A549 (cell line): ENCODE measurements at regions of chr12 and their contacts with region 1.

Region 1: GRCh38 chr12:2783936-2784600 is 10.7 kb upstream of the FKBP4 start:
- DNase-seq: peak; percentile 62 to 68
- ATAC-seq: peak; percentile 96 to 98
- H3K4me3 ChIP-seq: peak overlapping the region; percentile 27; the same call in 2 of the 3 replicates
- H3K27ac ChIP-seq: no peak overlapping the region
- H3K4me1 ChIP-seq: 0 out of 3 replicates have a peak, but pooled peaks cover 6% of the 10 kb centered on the region
- CTCF ChIP-seq: peak; percentile 72
- EP300 ChIP-seq: no peak
- POLR2A ChIP-seq: no peak
- RAD21 ChIP-seq: peak; percentile 64 to 74

Region 2: DNA sequence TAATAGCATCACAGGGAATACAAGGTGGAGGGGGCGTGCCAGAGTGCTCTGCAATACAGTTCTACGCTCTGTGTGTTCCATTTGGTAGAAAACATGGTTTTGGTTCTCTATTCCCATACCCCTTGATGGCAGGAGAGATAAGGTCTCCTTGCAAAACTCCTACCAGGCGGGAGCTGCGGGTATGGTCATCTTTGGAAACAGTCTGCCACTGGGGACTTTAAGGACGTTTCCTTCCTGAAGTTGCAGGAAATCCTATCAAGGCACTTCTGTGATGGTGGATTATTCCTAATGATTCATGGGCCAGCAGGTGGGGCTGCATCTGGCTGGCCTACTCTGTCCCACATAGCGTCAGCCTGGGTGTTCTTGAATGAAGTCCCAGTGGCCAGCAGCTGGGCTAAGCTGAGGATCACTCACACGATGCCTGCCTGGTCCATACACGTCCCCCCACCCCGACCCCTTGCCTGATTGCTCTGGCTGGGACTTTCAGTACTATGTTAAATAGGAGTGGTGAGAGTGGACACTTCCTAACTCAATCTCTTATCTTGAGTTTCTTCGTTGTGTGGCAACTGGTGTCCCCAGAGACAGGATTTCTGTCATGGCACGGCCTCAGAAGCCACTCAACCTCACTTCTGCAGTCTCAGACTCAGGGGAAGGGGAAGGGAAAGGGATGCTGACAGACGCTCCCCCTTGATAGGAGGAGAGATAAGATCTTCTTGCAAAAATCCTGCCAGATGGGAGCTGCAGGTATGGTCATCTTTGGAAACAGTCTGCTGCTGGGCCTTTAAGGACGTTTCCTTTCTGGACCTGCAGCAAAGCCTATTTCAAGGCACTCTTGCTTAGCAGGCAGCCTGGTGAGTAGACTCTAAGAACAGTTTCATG is 50.4 kb before region 1 on chr12:
- CTCF ChIA-PET with region 1: interaction called, 22 read pairs
- POLR2A ChIA-PET with region 1: no interaction called
- DNase-seq: peak in 1 of 2 experiments; percentile 16
- ATAC-seq: peak in 1 of 2 experiments; percentile 67; a peak in 3 of 6 replicates
- H3K4me3 ChIP-seq: no peak overlapping the region
- H3K27ac ChIP-seq: no peak overlapping the region
- H3K4me1 ChIP-seq: no peaks in the 10 kb centered on the region
- CTCF ChIP-seq: no peak
- EP300 ChIP-seq: no peak
- POLR2A ChIP-seq: no peak
- RAD21 ChIP-seq: no peak

Region 3: GRCh38 chr12:2739817-2740641 is 44.0 kb before region 1 on chr12:
- CTCF ChIA-PET with region 1: interaction called, 30 read pairs
- POLR2A ChIA-PET with region 1: no interaction called
- DNase-seq: peak in 1 of 2 experiments; percentile 44
- ATAC-seq: peak in 1 of 2 experiments; percentile 64; a peak in 4 of 6 replicates
- H3K4me3 ChIP-seq: no peak overlapping the region
- H3K27ac ChIP-seq: no peak overlapping the region
- H3K4me1 ChIP-seq: no peaks in the 10 kb centered on the region
- CTCF ChIP-seq: peak; percentile 56
- EP300 ChIP-seq: no peak
- POLR2A ChIP-seq: no peak
- RAD21 ChIP-seq: peak; percentile 64 to 75

Region 4: GRCh38 chr12:2759733-2760132 is 24.3 kb before region 1 on chr12:
- CTCF ChIA-PET with region 1: interaction called, 24 read pairs
- POLR2A ChIA-PET with region 1: no interaction called
- DNase-seq: no peak
- ATAC-seq: no peak
- H3K4me3 ChIP-seq: no peak overlapping the region
- H3K27ac ChIP-seq: no peak overlapping the region
- H3K4me1 ChIP-seq: no peaks in the 10 kb centered on the region
- CTCF ChIP-seq: no peak
- EP300 ChIP-seq: no peak
- POLR2A ChIP-seq: no peak
- RAD21 ChIP-seq: no peak

Region 5: DNA sequence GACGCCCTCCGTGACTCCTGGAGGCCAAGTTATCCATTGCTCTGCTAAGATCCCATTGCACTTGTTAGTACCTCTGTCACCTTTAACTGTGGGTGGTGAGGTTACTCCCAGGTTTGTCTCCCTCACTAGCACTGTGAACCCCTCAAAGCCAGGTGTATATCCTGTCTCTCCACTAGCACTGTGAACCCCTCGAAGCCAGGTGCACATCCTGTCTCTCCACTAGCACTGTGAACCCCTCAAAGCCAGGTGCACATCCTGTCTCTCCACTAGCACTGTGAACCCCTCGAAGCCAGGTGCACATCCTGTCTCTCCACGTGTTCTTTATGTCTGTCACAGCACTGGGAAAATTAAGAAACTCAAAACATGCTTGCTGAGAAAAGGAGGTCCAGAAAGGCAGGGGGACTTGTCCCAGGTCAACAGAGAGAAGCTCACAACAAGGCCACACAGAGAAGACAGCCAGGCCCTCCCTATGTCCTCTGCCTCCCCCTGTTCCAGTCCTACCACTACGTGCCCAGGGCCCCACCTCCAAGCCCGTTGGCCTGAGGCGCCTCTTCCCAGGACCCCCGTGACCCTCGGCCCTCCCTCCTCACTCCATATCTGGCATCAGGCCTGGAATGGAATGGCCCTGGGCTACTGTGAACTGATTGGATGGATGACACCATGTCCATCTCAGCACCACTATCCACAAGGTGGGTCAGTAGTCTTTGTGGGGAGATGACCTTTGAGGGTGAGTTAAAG is 15.7 kb before region 1 on chr12:
- CTCF ChIA-PET with region 1: interaction called, 18 read pairs
- POLR2A ChIA-PET with region 1: no interaction called
- DNase-seq: no peak
- ATAC-seq: no peak
- H3K4me3 ChIP-seq: no peak overlapping the region
- H3K27ac ChIP-seq: no peak overlapping the region
- H3K4me1 ChIP-seq: no peaks in the 10 kb centered on the region
- CTCF ChIP-seq: no peak
- EP300 ChIP-seq: no peak
- POLR2A ChIP-seq: no peak
- RAD21 ChIP-seq: no peak

Region 6: DNA sequence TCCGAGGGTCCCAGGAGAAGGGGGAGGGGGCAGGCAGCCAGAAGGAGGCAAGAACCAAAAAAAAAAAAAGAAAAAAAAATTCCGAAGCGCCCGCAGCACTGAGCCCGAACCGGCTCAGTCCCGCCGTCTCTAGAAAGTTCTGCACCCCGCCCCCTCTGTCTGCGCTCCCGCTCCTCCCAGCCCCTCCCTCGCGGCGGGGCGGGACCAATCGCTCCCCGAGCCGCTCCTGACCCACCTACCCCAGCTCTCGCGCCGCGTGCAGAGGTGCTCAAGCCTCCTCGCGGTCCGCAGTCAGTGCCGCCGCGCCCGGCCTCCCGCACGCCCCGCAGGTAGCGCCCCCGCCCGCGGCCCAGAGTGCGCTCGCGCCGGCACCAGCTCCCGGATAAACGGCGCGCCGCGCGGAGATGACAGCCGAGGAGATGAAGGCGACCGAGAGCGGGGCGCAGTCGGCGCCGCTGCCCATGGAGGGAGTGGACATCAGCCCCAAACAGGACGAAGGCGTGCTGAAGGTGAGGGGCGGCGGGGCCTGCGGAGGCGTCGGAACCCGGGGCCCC is 10.7 kb after region 1 on chr12 and contains the start of gene FKBP4:
- CTCF ChIA-PET with region 1: interaction called, 57 read pairs
- POLR2A ChIA-PET with region 1: interaction called, 3 read pairs
- DNase-seq: peak; percentile 84 to 91
- ATAC-seq: peak; percentile 92 to 94
- H3K4me3 ChIP-seq: peak within 1 kb of the TSS; percentile 76
- H3K27ac ChIP-seq: peak within 1 kb of the TSS; percentile 97 to 99
- H3K4me1 ChIP-seq: peaks cover 18% of the 10 kb centered on the region
- CTCF ChIP-seq: no peak
- EP300 ChIP-seq: no peak
- POLR2A ChIP-seq: peak; percentile 99
- RAD21 ChIP-seq: no peak
- polyA plus RNA-seq, gene FKBP4: 108 and 125 TPM in 2 replicates

Region 7: GRCh38 chr12:2812290-2813213 is 28.5 kb after region 1 on chr12 and contains the start of gene ITFG2:
- CTCF ChIA-PET with region 1: interaction called, 10 read pairs
- POLR2A ChIA-PET with region 1: interaction called, 4 read pairs
- DNase-seq: peak; percentile 96 to 99
- ATAC-seq: peak; percentile 97 to 98
- H3K4me3 ChIP-seq: peak within 1 kb of the TSS; percentile 61
- H3K27ac ChIP-seq: peak within 1 kb of the TSS; percentile 92
- H3K4me1 ChIP-seq: peaks cover 12% of the 10 kb centered on the region; the same call in 2 of the 3 replicates
- CTCF ChIP-seq: no peak
- EP300 ChIP-seq: no peak
- POLR2A ChIP-seq: peak; percentile 96
- RAD21 ChIP-seq: no peak
- polyA plus RNA-seq, gene ITFG2: 23.7 and 28.4 TPM in 2 replicates